ENCODE measurements at regions of chr12 and their contacts with region 1.

Region 1: DNA sequence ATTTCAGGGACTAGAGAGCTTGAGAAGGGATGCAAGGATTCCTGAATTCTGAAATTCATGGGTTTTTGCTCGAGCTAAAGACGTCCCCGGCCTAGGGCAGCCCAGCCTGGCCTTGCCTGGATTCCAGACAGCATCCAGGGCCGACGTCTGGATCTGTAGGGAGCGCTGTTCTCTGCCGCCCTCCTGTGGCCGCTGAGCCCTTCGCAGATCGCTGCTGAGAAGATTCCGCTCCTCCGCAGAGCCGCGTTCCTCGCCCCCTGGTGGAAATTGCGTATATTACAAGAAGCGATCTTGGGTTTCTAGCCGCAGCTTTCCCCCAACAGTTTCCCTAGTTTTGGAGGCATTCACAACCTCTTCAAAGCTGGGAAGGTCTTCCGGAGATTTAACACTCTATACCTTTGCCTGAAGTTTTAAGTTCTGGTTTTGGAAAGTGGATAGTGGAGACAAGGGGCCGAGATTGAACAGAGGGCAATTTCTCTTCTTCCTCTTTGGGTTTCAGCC is 5.1 kb downstream of the CISTR start:
- DNase-seq: peak; percentile 94
- ATAC-seq: peak; percentile 88 to 93
- H3K4me3 ChIP-seq: no peak overlapping the region
- H3K27ac ChIP-seq: no peak overlapping the region
- H3K4me1 ChIP-seq: peaks cover 24% of the 10 kb centered on the region
- H3K27me3 ChIP-seq: peaks cover 81% of the 10 kb centered on the region
- CTCF ChIP-seq: peak; percentile 100

Region 2: DNA sequence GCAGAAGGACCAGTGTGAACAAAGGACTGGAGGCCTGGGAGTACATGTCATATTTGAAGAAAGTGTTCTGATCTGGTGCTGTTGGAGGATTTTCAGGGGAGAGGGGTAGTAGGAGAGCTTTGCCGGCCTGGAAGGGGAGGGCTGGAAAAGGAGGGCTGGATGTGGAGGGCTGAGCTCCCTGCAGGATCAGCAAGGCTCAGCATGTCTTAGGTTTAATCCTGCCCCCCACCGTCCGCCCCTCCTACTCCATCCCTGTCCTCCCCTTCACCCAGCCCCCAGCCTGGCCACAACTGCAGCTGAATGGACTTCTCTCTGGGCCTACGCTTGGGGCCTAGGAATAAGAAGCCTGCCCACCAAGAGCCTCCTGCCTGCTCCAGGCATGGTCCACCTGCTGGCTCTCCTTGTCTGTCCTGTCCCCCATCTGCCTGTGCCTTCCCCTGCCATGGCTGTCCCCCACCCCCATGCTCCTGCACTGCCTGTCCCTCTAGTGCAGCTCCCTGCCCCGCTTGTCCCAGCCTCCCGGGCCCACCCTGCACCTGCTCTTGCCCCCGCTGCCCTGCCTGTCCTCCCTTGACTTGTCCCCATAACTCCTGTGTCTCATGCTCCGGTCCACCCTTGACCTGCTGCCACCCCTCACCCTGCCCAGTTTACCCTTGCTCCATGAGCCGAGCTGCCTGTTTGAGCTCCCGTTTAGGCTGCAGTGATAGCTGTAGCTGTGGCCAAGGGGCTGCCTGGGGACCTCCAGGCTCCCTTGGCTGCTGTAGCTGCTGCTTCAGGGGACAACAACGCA is 504.8 kb before region 1 on chr12:
- intact Hi-C with region 1: no loop called
- DNase-seq: no peak
- ATAC-seq: peak in 1 of 2 donors; percentile 13
- H3K4me3 ChIP-seq: no peak overlapping the region
- H3K27ac ChIP-seq: no peak overlapping the region
- H3K4me1 ChIP-seq: no peaks in the 10 kb centered on the region
- H3K27me3 ChIP-seq: no peaks in the 10 kb centered on the region
- CTCF ChIP-seq: no peak

Region 3: GRCh38 chr12:53543539-53543938 is 203.1 kb before region 1 on chr12:
- intact Hi-C with region 1: no loop called
- DNase-seq: peak; percentile 51
- ATAC-seq: peak; percentile 87 to 88
- H3K4me3 ChIP-seq: no peak overlapping the region
- H3K27ac ChIP-seq: peak overlapping the region; percentile 59
- H3K4me1 ChIP-seq: peaks cover 34% of the 10 kb centered on the region
- H3K27me3 ChIP-seq: no peaks in the 10 kb centered on the region
- CTCF ChIP-seq: peak; percentile 79

Region 4: DNA sequence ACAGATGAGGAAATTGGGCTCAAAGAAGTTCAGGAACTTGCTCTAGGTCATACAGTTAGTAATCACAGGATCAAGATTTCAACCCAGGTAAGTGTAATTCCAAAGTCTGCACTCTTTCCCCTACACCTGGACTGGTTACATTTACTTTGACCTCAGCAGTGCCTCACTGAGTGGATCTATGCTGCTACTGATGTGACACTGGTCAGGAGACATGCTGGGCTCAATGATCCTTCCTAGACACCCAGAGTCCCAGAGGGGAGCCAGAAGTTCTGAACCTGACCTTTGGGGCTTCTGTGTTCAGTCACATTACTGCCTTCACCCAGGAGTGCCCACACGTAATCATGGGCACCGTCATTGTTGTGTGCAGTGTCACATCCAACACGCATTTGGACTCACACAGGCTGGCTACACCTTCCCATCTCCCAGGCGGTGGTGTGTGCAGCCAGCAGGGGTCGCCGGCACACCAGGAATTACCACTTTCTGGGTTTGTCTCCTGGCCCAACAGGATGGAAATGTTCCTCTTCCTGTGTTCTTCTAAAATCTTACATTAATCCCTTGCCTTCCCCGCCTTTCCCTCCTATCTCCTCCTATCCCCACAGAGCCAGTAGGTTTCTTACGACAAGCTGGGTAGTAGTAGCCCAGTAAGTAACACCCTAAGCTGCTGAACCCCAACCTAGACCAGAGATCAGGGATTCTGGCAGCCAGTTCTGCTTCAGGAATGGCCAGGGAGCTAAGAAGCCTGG is 45.0 kb before region 1 on chr12:
- intact Hi-C with region 1: loop called (anchors 5 kb)
- DNase-seq: peak; percentile 84
- ATAC-seq: peak; percentile 91 to 95
- H3K4me3 ChIP-seq: no peak overlapping the region
- H3K27ac ChIP-seq: no peak overlapping the region
- H3K4me1 ChIP-seq: peaks cover 7% of the 10 kb centered on the region
- H3K27me3 ChIP-seq: peaks cover 60% of the 10 kb centered on the region
- CTCF ChIP-seq: peak; percentile 93

Region 5: GRCh38 chr12:53892760-53893159 is 146.1 kb after region 1 on chr12:
- intact Hi-C with region 1: no loop called
- DNase-seq: no peak
- ATAC-seq: no peak
- H3K4me3 ChIP-seq: no peak overlapping the region
- H3K27ac ChIP-seq: no peak overlapping the region
- H3K4me1 ChIP-seq: no peaks in the 10 kb centered on the region
- H3K27me3 ChIP-seq: peaks cover 40% of the 10 kb centered on the region
- CTCF ChIP-seq: no peak

Measured in lower lobe of right lung (tissue), 2 donors.